ENCODE measurements at regions of chr3 and their contacts with region 1.

Region 1: GRCh38 chr3:69306239-69307185 is 79.4 kb downstream of the FRMD4B start:
- DNase-seq: peak; percentile 85
- H3K4me3 ChIP-seq: no peak overlapping the region
- H3K27ac ChIP-seq: no peak overlapping the region
- H3K4me1 ChIP-seq: peaks cover 12% of the 10 kb centered on the region
- H3K27me3 ChIP-seq: no peaks in the 10 kb centered on the region
- CTCF ChIP-seq: peak; percentile 89 to 92
- POLR2A ChIP-seq: no peak

Region 2: GRCh38 chr3:69174871-69175737 is 131.4 kb before region 1 on chr3:
- CTCF ChIA-PET with region 1: interaction called, 20 read pairs
- POLR2A ChIA-PET with region 1: no interaction called
- dilution Hi-C with region 1: no loop called
- intact Hi-C with region 1: no loop called
- DNase-seq: no peak
- H3K4me3 ChIP-seq: no peak overlapping the region
- H3K27ac ChIP-seq: peak overlapping the region; percentile 77
- H3K4me1 ChIP-seq: peaks cover 39% of the 10 kb centered on the region
- H3K27me3 ChIP-seq: no peaks in the 10 kb centered on the region
- CTCF ChIP-seq: no peak
- POLR2A ChIP-seq: no peak

Region 3: DNA sequence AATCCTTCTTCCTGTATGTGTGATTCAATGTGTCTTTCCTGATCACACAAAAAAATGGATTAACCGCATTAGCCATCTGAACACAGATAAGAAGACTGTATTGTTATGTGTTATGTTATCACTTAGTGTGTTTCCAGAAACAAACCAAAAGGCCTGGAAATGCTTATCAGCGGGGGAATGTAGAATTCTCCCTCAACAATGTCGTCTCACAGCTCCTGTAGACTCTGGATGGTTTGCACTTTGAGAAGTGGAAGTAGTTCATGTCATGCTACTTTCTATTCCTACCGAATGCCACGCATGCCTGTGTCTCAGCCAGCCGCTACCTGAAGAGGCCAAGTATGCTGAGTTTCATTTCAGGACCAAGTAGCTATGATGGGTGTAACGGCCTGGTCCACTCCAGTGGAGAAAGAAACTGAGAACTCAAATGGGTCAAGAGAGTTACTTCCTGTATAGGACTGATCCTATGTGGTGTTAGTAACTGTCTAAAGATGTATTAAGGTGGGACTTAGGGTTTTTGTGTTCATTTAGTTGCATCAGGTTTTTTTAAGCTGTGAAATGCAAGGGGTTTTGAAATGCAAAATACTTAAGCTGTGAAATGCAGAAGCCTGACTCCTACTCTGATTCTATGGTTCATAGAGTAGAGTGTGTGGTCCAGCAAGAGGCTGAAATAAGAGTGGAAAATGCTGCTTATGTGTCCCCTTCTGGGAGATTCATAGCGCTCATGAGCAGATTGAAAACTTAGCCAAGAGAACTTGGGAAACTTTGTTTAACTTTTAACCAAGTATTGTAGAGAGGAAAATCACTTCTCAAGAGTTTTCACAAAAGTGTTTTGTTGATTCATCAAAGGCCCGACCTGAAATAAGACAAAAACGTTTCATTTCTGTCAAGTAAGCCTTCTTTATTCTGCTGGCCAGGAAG is 65.6 kb before region 1 on chr3:
- CTCF ChIA-PET with region 1: interaction called, 22 read pairs
- POLR2A ChIA-PET with region 1: no interaction called
- dilution Hi-C with region 1: no loop called
- intact Hi-C with region 1: loop called (anchors 5 kb)
- DNase-seq: peak; percentile 80
- H3K4me3 ChIP-seq: no peak overlapping the region
- H3K27ac ChIP-seq: peak overlapping the region; percentile 90
- H3K4me1 ChIP-seq: peaks cover 66% of the 10 kb centered on the region
- H3K27me3 ChIP-seq: no peaks in the 10 kb centered on the region
- CTCF ChIP-seq: no peak
- POLR2A ChIP-seq: no peak

Region 4: GRCh38 chr3:69318410-69318809 is 11.9 kb after region 1 on chr3:
- CTCF ChIA-PET with region 1: interaction called, 17 read pairs
- POLR2A ChIA-PET with region 1: interaction called, 3 read pairs
- dilution Hi-C with region 1: no loop called
- intact Hi-C with region 1: no loop called
- DNase-seq: no peak
- H3K4me3 ChIP-seq: no peak overlapping the region
- H3K27ac ChIP-seq: no peak overlapping the region
- H3K4me1 ChIP-seq: peaks cover 3% of the 10 kb centered on the region
- H3K27me3 ChIP-seq: no peaks in the 10 kb centered on the region
- CTCF ChIP-seq: no peak
- POLR2A ChIP-seq: no peak

Region 5: GRCh38 chr3:69410250-69410649 is 103.7 kb after region 1 on chr3:
- CTCF ChIA-PET with region 1: interaction called, 88 read pairs
- POLR2A ChIA-PET with region 1: no interaction called
- dilution Hi-C with region 1: no loop called
- intact Hi-C with region 1: loop called (anchors 1 kb)
- DNase-seq: peak; percentile 89
- H3K4me3 ChIP-seq: no peak overlapping the region
- H3K27ac ChIP-seq: no peak overlapping the region
- H3K4me1 ChIP-seq: peaks cover 27% of the 10 kb centered on the region
- H3K27me3 ChIP-seq: no peaks in the 10 kb centered on the region
- CTCF ChIP-seq: peak; percentile 83 to 90
- POLR2A ChIP-seq: no peak

Measured in endothelial cell of umbilical vein (primary cell).